A673 (cell line): ENCODE measurements at regions of chr9 and their contacts with region 1.

Region 1: DNA sequence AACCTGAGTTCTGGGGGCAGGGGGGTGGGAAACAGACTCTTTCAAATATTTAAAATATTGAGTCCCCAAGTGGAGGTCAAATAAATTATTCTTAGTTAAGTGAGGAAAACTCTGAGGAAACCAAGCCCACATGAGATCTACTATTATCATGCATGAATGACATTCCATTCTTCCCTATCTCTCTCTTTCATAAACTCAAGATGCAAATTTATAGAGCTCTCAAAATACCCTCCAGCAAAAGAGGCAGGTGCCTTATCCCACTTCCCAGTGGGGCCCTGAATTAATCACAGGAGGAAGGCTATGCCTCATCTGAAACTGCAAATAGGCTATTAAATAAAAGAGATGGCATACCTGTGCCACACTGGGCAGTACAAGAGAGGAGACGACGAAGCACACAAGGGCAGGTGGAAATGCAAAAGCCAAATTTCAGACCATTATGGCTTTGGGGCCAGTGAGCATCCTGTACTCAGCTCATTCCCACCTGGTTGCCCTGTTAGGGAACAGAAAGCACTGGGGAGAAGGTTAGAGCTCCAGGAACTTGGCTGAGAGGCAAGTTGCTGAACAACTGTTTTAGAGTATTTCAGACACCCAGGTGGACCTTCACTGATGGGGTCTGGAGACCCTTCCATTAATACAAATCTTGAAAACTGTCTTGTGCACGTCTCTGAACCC is 102.2 kb upstream of the EQTN start:
- DNase-seq: no peak
- H3K4me3 ChIP-seq: no peak overlapping the region
- H3K27ac ChIP-seq: no peak overlapping the region
- H3K4me1 ChIP-seq: no peaks in the 10 kb centered on the region
- H3K27me3 ChIP-seq: no peaks in the 10 kb centered on the region
- CTCF ChIP-seq: no peak

Region 2: DNA sequence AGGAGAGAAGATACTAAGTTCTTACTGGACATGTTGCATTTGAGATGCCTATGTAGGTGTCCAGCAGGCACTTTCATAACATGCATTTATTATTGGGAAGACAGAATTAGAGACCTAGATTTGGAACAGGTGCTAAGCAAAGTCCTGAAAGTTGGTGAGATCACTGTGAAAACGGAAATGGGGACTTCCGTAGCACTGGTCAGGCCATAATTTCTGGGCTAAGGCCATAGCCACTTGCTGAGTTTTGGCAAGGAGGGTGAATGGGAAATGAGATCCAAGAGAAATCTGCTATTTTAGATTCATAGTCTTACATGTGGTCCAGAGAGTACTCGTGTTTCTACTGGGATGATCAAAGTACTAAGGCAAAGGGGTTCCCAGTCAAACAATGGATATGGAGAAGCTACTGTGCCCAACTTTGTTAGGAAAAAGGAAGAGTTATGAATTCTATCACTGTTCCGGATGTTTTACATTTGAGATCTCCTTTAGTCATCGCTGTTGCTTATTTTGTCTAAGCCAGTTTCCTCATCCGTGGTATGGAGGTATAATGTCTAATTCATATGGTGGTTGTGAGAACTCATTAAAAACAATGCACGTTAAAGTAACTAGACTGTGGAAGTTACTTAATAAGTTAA is 256.7 kb before region 1 on chr9:
- CTCF ChIA-PET with region 1: no interaction called
- POLR2A ChIA-PET with region 1: no interaction called
- intact Hi-C with region 1: no loop called
- DNase-seq: no peak
- H3K4me3 ChIP-seq: no peak overlapping the region
- H3K27ac ChIP-seq: no peak overlapping the region
- H3K4me1 ChIP-seq: no peaks in the 10 kb centered on the region
- H3K27me3 ChIP-seq: no peaks in the 10 kb centered on the region
- CTCF ChIP-seq: no peak

Region 3: GRCh38 chr9:27412121-27412520 is 13.0 kb after region 1 on chr9:
- CTCF ChIA-PET with region 1: no interaction called
- POLR2A ChIA-PET with region 1: interaction called, 20 read pairs
- intact Hi-C with region 1: no loop called
- DNase-seq: no peak
- H3K4me3 ChIP-seq: no peak overlapping the region
- H3K27ac ChIP-seq: no peak overlapping the region
- H3K4me1 ChIP-seq: no peaks in the 10 kb centered on the region
- H3K27me3 ChIP-seq: no peaks in the 10 kb centered on the region
- CTCF ChIP-seq: no peak